Heart right ventricle (tissue), 16 donors: ENCODE measurements at regions of chrX and their contacts with region 1.

Region 1: DNA sequence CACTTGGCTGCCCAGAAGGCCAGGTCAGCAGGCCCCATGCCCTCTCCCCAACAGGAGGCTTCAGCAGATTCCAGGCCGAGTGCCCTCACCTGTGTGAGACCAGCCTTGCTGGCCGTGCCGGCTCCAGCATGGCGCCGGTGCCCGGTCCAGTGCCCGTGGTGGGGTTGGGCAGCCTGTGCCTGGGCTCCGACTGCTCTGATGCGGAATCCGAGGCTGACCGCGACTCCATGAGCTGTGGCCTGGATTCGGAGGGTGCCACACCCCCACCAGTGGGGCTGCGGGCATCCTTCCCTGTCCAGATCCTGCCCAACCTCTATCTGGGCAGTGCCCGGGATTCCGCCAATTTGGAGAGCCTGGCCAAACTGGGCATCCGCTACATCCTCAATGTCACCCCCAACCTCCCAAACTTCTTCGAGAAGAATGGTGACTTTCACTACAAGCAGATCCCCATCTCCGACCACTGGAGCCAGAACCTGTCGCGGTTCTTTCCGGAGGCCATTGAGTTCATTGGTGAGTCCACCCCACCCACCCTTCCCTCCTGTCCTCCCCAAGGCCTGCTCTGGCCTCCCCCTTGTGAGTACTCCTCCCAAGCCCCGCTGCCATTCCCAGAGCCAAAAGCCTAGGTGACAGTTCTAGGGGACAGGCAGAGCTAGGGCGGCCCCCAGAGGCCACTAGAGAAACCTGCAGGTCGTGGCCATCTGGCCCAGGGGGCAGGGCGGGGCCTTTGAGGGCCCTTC is 2.3 kb downstream of the DUSP9 start:
- DNase-seq: peak; percentile 17 to 28
- ATAC-seq: peak in 5 of 8 donors; percentile 42 to 70 (median 60)
- H3K4me3 ChIP-seq: no peak overlapping the region
- H3K27ac ChIP-seq: no peak overlapping the region
- H3K4me1 ChIP-seq: peaks cover 0 to 11% (median 3%) of the 10 kb centered on the region in 9 donors
- H3K27me3 ChIP-seq: peaks cover 0 to 52% (median 42%) of the 10 kb centered on the region in 7 donors
- CTCF ChIP-seq: peak in 8 of 9 donors; percentile 9 to 51 (median 41)

Region 2: GRCh38 chrX:153554519-153555167 is 94.7 kb before region 1 on chrX:
- intact Hi-C with region 1: loop called in 4 of 10 experiments (anchors 1 to 10 kb)
- DNase-seq: peak; percentile 48 to 69
- ATAC-seq: peak; percentile 42 to 81 (median 68)
- H3K4me3 ChIP-seq: no peak overlapping the region
- H3K27ac ChIP-seq: no peak overlapping the region
- H3K4me1 ChIP-seq: no peaks in the 10 kb centered on the region
- H3K27me3 ChIP-seq: no peaks in the 10 kb centered on the region
- CTCF ChIP-seq: peak; percentile 29 to 70 (median 64)

Region 3: GRCh38 chrX:153599192-153600031 is 49.9 kb before region 1 on chrX:
- intact Hi-C with region 1: loop called in 1 of 10 experiments (anchors 10 kb)
- DNase-seq: peak; percentile 84 to 92
- ATAC-seq: peak; percentile 94 to 98 (median 96)
- H3K4me3 ChIP-seq: peak overlapping the region; percentile 27 to 75 (median 68)
- H3K27ac ChIP-seq: peak overlapping the region in 9 of 10 donors; percentile 44 to 83 (median 70)
- H3K4me1 ChIP-seq: peaks cover 0 to 25% (median 10%) of the 10 kb centered on the region in 9 donors
- H3K27me3 ChIP-seq: no peaks in the 10 kb centered on the region
- CTCF ChIP-seq: no peak

Region 4: DNA sequence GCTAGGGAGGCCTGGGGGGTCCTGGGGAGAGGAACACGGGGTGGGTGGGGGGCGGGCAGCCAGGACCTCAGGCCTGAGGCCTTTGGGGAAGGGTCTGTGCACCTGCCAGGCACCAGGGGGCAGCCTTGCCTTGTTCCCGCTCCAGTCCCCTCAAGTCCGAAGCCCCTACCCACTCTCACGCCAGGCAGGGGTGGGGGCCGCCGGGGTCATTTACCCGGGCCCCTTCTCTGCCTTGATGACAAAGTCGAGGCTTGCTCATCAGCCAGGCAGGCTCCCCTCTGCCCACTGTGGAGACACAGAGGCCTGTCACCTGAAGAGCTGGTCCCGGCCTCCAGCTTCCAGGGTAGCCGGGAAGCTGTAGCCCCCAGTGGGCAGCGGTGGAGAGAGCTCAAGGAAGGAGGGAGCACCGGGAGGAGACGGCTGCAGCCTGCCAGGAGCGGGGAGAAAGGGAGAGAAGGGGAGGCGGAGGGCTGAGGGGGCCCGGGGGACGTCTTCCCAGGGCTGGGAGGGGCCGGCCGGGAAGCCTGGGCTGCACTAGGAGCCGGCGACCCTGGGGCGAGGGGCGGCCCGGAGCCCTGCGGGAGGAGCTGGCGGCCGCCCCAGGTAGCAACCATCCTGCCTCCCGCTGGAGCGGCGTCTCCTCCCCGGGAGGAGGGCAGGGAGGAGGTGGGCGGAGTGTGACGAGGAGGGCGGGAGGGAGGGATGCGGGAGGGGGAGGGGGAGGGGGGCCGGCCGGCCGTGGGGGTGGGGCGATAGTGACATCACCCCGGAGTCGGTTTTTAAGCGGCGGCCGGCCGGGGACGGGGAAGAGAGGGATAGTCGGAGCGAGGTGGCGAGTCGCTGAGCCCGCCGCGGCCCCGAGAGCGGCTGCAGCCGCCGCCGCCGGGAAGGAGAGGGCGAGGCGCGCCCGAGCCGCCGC is 38.0 kb after region 1 on chrX and contains the start of gene SLC6A8:
- intact Hi-C with region 1: loop called in 1 of 10 experiments (anchors 1 kb)
- DNase-seq: peak; percentile 73 to 80
- ATAC-seq: peak; percentile 45 to 76 (median 68)
- H3K4me3 ChIP-seq: peak within 1 kb of the TSS; percentile 14 to 53 (median 47)
- H3K27ac ChIP-seq: peak within 1 kb of the TSS in 9 of 10 donors; percentile 70 to 82 (median 77)
- H3K4me1 ChIP-seq: peaks cover 0 to 17% (median 0%) of the 10 kb centered on the region in 9 donors
- H3K27me3 ChIP-seq: peaks cover 0 to 58% (median 0%) of the 10 kb centered on the region in 7 donors
- CTCF ChIP-seq: peak in 8 of 9 donors; percentile 11 to 55 (median 40)
- total RNA-seq, gene SLC6A8: 150 to 238 (median 186) TPM

Region 5: GRCh38 chrX:154785716-154786115 is 1136.4 kb after region 1 on chrX:
- intact Hi-C with region 1: no loop called
- DNase-seq: no peak
- ATAC-seq: no peak
- H3K4me3 ChIP-seq: no peak overlapping the region
- H3K27ac ChIP-seq: no peak overlapping the region
- H3K4me1 ChIP-seq: no peaks in the 10 kb centered on the region
- H3K27me3 ChIP-seq: no peaks in the 10 kb centered on the region
- CTCF ChIP-seq: no peak

Region 6: GRCh38 chrX:154840856-154841255 is 1191.5 kb after region 1 on chrX:
- intact Hi-C with region 1: loop called in 1 of 10 experiments (anchors 10 kb)
- DNase-seq: no peak
- ATAC-seq: no peak
- H3K4me3 ChIP-seq: no peak overlapping the region
- H3K27ac ChIP-seq: no peak overlapping the region
- H3K4me1 ChIP-seq: no peaks in the 10 kb centered on the region
- H3K27me3 ChIP-seq: no peaks in the 10 kb centered on the region
- CTCF ChIP-seq: peak in 7 of 9 donors; percentile 33 to 57 (median 49)

Region 7: GRCh38 chrX:155263854-155264628 is 1614.7 kb after region 1 on chrX and contains the start of gene RAB39B:
- intact Hi-C with region 1: no loop called
- DNase-seq: peak; percentile 21 to 28
- ATAC-seq: peak; percentile 79 to 96 (median 81)
- H3K4me3 ChIP-seq: peak within 1 kb of the TSS in 9 of 10 donors; percentile 18 to 59 (median 53)
- H3K27ac ChIP-seq: peak within 1 kb of the TSS in 1 of 10 donors; percentile 66
- H3K4me1 ChIP-seq: peaks cover 0 to 12% (median 0%) of the 10 kb centered on the region in 9 donors
- H3K27me3 ChIP-seq: no peaks in the 10 kb centered on the region
- CTCF ChIP-seq: peak in 5 of 9 donors; percentile 4 to 46 (median 22)
- total RNA-seq, gene RAB39B: 0.07 to 0.25 (median 0.17) TPM in 7 of 10 donors, not detected in the others